Testis (tissue), 5 donors: ENCODE measurements at regions of chr12 and their contacts with region 1.

Region 1: GRCh38 chr12:55068416-55069010 is 48.7 kb downstream of the NEUROD4 start:
- DNase-seq: peak; percentile 25
- H3K4me3 ChIP-seq: no peak overlapping the region
- H3K27ac ChIP-seq: no peak overlapping the region
- H3K4me1 ChIP-seq: no peaks in the 10 kb centered on the region
- H3K27me3 ChIP-seq: no peaks in the 10 kb centered on the region
- CTCF ChIP-seq: peak; percentile 41 to 76 (median 73)
- POLR2A ChIP-seq: no peak

Region 2: DNA sequence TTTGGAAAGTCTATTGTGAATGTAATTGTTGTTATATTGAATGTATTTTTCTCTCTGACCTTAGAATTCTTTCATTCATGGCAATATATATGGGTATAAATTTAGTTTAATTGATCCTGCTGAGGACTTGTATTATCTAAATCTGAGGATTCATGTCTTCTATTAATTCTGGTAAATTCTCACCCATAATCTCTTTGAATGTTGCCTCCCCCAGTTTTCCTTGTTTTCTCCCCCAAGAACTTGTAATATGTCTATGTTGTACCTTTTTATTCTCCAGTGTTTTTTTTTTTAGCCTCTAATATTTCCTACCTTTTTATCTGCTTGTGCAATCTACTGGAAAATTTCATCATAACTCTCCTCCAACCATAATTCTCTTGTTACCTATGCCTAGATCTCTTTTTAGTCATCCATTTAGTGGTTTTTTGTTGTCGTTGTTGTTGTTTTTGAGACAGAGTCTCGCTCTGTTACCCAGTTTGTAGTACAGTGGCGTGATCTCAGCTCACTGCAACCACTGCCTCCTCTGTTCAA is 1151.3 kb before region 1 on chr12:
- intact Hi-C with region 1: no loop called
- DNase-seq: no peak
- H3K4me3 ChIP-seq: no peak overlapping the region
- H3K27ac ChIP-seq: no peak overlapping the region
- H3K4me1 ChIP-seq: no peaks in the 10 kb centered on the region
- H3K27me3 ChIP-seq: no peaks in the 10 kb centered on the region
- CTCF ChIP-seq: no peak
- POLR2A ChIP-seq: no peak

Region 3: DNA sequence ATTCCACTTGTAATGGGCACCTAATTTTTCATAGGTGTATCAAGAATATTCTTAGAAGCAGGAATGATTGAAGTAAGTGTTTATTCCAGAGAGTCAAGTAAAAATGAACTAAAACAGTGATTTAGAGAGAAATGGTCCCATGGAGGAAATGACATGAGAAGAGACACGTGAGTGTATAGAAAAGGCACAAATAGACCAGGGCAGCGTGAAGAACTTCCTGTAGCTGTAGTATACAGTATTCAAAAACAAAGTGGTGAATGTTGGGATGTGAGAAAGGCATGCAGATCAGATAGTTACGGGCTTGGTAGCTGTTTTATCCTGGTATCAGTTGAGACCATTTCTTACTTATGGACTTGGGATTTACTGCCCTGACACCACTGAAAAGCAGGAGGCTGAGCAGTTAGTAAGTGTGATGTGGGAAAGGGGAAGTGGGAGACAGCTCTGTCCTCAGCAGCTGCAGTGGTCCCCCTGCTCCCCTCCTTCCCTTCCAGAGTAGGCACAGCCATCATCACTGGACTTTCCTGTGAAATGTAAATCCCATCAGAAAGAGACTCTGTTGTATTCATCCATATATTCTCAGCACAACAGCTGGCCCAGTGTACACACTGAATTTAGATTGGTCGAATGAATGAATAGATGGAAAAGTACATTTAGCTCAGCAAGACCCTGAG is 67.2 kb before region 1 on chr12:
- intact Hi-C with region 1: loop called (anchors 10 kb)
- DNase-seq: no peak
- H3K4me3 ChIP-seq: no peak overlapping the region
- H3K27ac ChIP-seq: no peak overlapping the region
- H3K4me1 ChIP-seq: no peaks in the 10 kb centered on the region
- H3K27me3 ChIP-seq: no peaks in the 10 kb centered on the region
- CTCF ChIP-seq: no peak
- POLR2A ChIP-seq: no peak

Region 4: GRCh38 chr12:55142669-55143565 is 74.4 kb after region 1 on chr12:
- intact Hi-C with region 1: no loop called
- DNase-seq: peak; percentile 83
- H3K4me3 ChIP-seq: no peak overlapping the region
- H3K27ac ChIP-seq: no peak overlapping the region
- H3K4me1 ChIP-seq: no peaks in the 10 kb centered on the region
- H3K27me3 ChIP-seq: no peaks in the 10 kb centered on the region
- CTCF ChIP-seq: peak; percentile 34 to 72 (median 65)
- POLR2A ChIP-seq: no peak

Region 5: GRCh38 chr12:55171445-55171844 is 102.9 kb after region 1 on chr12:
- intact Hi-C with region 1: no loop called
- DNase-seq: no peak
- H3K4me3 ChIP-seq: no peak overlapping the region
- H3K27ac ChIP-seq: no peak overlapping the region
- H3K4me1 ChIP-seq: no peaks in the 10 kb centered on the region
- H3K27me3 ChIP-seq: no peaks in the 10 kb centered on the region
- CTCF ChIP-seq: no peak
- POLR2A ChIP-seq: no peak